ENCODE measurements at regions of chr7 and their contacts with region 1.

Region 1: GRCh38 chr7:108167460-108167859 is 37.3 kb upstream of the LAMB4 start:
- DNase-seq: no peak

Region 2: GRCh38 chr7:108459931-108460551 is 292.6 kb after region 1 on chr7:
- CTCF ChIA-PET with region 1: interaction called, 15 read pairs
- POLR2A ChIA-PET with region 1: no interaction called
- DNase-seq: peak; percentile 40